H1 (cell line): ENCODE measurements at regions of chr5 and their contacts with region 1.

Region 1: DNA sequence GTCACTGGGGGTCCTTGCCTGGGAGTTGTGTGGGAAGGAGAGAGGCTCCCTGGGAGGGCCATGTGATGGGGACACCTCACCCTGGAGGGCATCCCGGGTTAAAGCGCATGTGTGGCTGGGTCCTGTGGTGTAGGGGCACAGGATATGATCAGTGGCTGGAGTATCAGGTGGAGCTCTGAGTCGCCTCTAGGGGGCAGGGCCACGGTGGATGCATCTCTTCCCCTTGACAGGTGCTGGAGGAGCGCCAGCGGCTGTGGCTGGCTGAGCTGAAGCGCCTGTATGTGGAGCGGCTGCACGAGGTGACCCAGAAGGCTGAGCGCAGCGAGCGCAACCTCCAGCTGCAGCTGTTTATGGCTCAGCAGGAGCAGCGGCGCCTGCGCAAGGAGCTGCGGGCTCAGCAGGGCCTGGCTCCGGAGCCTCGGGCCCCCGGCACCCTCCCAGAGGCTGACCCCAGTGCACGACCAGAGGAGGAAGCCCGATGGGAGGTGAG is 7.6 kb downstream of the N4BP3 start:
- DNase-seq: peak; percentile 41 to 77
- H3K4me3 ChIP-seq: no peak overlapping the region
- H3K27ac ChIP-seq: no peak overlapping the region; the same call in 1 of the 2 replicates
- H3K4me1 ChIP-seq: peaks cover 11 to 64% (median 37%) of the 10 kb centered on the region in 4 experiments
- H3K27me3 ChIP-seq: no peaks in the 10 kb centered on the region
- CTCF ChIP-seq: peak in 2 of 3 experiments; percentile 74 to 88; a peak in 3 of 4 replicates
- EP300 ChIP-seq: no peak
- POLR2A ChIP-seq: no peak; a peak in 1 of 3 replicates
- RAD21 ChIP-seq: peak; percentile 38 to 61

Region 2: GRCh38 chr5:178083943-178084342 is 37.0 kb before region 1 on chr5:
- CTCF ChIA-PET with region 1: interaction called, 189 read pairs
- POLR2A ChIA-PET with region 1: interaction called, 7 read pairs
- DNase-seq: no peak
- H3K4me3 ChIP-seq: no peak overlapping the region
- H3K27ac ChIP-seq: no peak overlapping the region
- H3K4me1 ChIP-seq: peaks cover 0 to 5% (median 3%) of the 10 kb centered on the region in 4 experiments; a peak in 1 of 7 replicates
- H3K27me3 ChIP-seq: no peaks in the 10 kb centered on the region
- CTCF ChIP-seq: no peak
- EP300 ChIP-seq: no peak
- POLR2A ChIP-seq: no peak
- RAD21 ChIP-seq: no peak

Region 3: DNA sequence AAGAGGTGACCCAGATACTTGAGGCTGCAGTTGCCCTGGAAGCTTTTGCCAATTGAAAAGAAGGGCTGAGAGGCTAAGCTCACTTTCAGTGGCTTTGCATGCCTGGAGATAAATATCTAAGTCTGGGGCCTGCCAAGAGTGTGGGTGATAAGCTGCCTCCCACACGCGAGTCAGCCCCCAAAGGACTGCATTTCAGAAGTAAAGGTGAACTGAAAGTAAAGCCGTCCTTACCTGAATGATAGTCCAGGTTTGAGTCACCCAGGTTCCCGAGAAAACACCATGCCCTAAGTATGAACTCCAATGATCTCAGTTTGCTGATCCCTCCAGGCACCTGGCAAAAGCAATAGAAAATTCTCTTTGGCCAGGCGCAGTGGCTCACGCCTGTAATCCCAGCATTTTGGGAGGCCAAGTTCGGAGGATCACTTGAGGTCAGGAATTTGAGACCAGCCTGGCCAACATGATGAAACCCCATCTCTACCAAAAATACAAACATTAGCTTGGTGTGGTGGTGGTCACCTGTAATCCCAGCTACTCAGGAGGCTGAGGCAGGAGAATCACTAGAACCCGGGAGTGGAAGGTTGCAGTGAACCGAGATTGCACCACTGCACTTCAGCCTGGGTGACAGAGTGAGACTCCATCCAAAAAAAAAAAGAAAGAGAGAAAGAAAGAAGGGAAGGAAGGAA is 29.9 kb before region 1 on chr5:
- CTCF ChIA-PET with region 1: interaction called, 5 read pairs
- POLR2A ChIA-PET with region 1: interaction called, 12 read pairs
- DNase-seq: no peak
- H3K4me3 ChIP-seq: no peak overlapping the region
- H3K27ac ChIP-seq: no peak overlapping the region
- H3K4me1 ChIP-seq: no peaks in the 10 kb centered on the region
- H3K27me3 ChIP-seq: no peaks in the 10 kb centered on the region
- CTCF ChIP-seq: no peak
- EP300 ChIP-seq: no peak
- POLR2A ChIP-seq: no peak
- RAD21 ChIP-seq: no peak

Region 4: DNA sequence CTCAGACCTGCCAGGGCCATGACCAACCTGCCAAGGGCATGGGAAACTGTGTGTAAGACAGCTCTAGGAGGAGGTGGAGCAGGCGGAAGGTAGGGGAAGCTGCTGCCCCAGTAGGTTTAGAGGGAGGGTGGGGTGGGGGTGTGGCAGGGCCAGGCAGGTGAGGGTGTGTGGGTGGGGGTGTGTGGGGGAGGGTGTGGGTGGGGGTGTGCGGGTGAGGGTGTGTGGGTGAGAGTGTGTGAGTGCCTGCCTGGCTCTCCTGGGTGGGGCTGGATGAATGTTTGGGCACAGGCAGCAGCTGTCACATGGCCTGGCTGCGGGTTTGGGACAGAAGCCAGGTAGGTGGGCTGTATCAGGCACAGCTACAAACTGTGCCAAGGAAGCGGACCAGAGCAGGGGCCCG is 16.4 kb before region 1 on chr5:
- CTCF ChIA-PET with region 1: interaction called, 48 read pairs
- POLR2A ChIA-PET with region 1: interaction called, 1,250 read pairs
- DNase-seq: no peak
- H3K4me3 ChIP-seq: no peak overlapping the region
- H3K27ac ChIP-seq: no peak overlapping the region
- H3K4me1 ChIP-seq: 0 out of 7 replicates have a peak, but pooled peaks cover 0 to 7% (median 1%) of the 10 kb centered on the region in 4 experiments
- H3K27me3 ChIP-seq: no peaks in the 10 kb centered on the region
- CTCF ChIP-seq: no peak
- EP300 ChIP-seq: no peak
- POLR2A ChIP-seq: no peak
- RAD21 ChIP-seq: no peak